ENCODE measurements at regions of chr3 and their contacts with region 1.

Region 1: GRCh38 chr3:79032686-79033318 is 735.0 kb downstream of the ROBO1 start:
- DNase-seq: peak in 2 of 4 donors; percentile 46 to 63
- ATAC-seq: peak; percentile 73
- H3K4me3 ChIP-seq: no peak overlapping the region
- H3K27ac ChIP-seq: no peak overlapping the region
- H3K4me1 ChIP-seq: no peaks in the 10 kb centered on the region
- H3K27me3 ChIP-seq: no peaks in the 10 kb centered on the region
- CTCF ChIP-seq: peak; percentile 31 to 48

Region 2: DNA sequence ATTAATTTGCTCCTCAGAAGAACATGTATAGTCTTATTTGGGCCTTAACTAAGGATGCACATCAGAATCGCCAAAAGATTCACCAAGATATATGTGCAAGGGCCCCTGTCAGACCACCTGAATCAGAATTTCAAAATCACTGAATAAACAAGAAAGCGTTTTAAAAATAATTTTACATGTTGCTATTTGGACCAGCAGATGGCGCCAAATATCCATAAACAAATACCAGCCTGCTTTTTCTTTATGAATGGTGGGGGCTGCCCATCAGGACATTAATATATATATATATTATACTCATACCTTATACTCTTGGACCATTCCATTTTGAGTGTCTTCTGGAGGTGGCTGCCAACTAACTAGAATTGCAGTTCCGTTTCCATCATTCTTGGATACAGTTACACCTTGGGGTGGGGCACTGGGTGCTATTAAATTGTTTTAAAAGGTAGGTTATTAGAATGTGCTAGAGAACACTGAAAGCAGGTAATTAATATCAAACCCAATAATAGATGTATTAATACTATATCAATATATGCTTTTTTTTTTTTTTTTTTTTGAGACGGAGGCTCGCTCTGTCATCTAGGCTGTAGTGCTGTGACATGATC is 373.3 kb before region 1 on chr3:
- intact Hi-C with region 1: loop called in 1 of 2 experiments (anchors 10 kb)
- DNase-seq: peak in 1 of 4 donors; percentile 56
- ATAC-seq: peak; percentile 27
- H3K4me3 ChIP-seq: no peak overlapping the region
- H3K27ac ChIP-seq: no peak overlapping the region
- H3K4me1 ChIP-seq: no peaks in the 10 kb centered on the region
- H3K27me3 ChIP-seq: no peaks in the 10 kb centered on the region
- CTCF ChIP-seq: peak; percentile 44 to 46

Region 3: GRCh38 chr3:79203144-79203519 is 170.3 kb after region 1 on chr3:
- intact Hi-C with region 1: no loop called
- DNase-seq: no peak
- ATAC-seq: no peak
- H3K4me3 ChIP-seq: no peak overlapping the region
- H3K27ac ChIP-seq: no peak overlapping the region
- H3K4me1 ChIP-seq: no peaks in the 10 kb centered on the region
- H3K27me3 ChIP-seq: no peaks in the 10 kb centered on the region
- CTCF ChIP-seq: no peak

Measured in left lung (tissue), 14 donors.